Pancreas (tissue), 10 donors: ENCODE measurements at regions of chr3 and their contacts with region 1.

Region 1: GRCh38 chr3:9396700-9397521 is 504 bp upstream of the SETD5 start:
- DNase-seq: peak; percentile 98 to 99 (median 98)
- ATAC-seq: peak; percentile 79 to 84 (median 80)
- H3K4me3 ChIP-seq: peak overlapping the region; percentile 54 to 94 (median 78)
- H3K27ac ChIP-seq: peak overlapping the region; percentile 97 to 99 (median 98)
- H3K4me1 ChIP-seq: peaks cover 48 to 53% (median 52%) of the 10 kb centered on the region in 3 donors
- H3K27me3 ChIP-seq: no peaks in the 10 kb centered on the region
- CTCF ChIP-seq: no peak

Region 2: GRCh38 chr3:9448643-9449042 is 51.7 kb after region 1 on chr3:
- intact Hi-C with region 1: loop called in 1 of 3 experiments (anchors 10 kb)
- DNase-seq: no peak
- ATAC-seq: no peak
- H3K4me3 ChIP-seq: no peak overlapping the region
- H3K27ac ChIP-seq: no peak overlapping the region
- H3K4me1 ChIP-seq: peaks cover 0 to 3% (median 0%) of the 10 kb centered on the region in 3 donors
- H3K27me3 ChIP-seq: no peaks in the 10 kb centered on the region
- CTCF ChIP-seq: no peak